HEK293 (cell line): ENCODE measurements at regions of chr10 and their contacts with region 1.

Region 1: GRCh38 chr10:74244097-74244685 is 93.2 kb downstream of the ADK start:
- H3K4me3 ChIP-seq: no peak overlapping the region
- H3K27ac ChIP-seq: no peak overlapping the region
- H3K4me1 ChIP-seq: no peaks in the 10 kb centered on the region
- CTCF ChIP-seq: peak; percentile 12; the same call in 1 of the 2 replicates

Region 2: DNA sequence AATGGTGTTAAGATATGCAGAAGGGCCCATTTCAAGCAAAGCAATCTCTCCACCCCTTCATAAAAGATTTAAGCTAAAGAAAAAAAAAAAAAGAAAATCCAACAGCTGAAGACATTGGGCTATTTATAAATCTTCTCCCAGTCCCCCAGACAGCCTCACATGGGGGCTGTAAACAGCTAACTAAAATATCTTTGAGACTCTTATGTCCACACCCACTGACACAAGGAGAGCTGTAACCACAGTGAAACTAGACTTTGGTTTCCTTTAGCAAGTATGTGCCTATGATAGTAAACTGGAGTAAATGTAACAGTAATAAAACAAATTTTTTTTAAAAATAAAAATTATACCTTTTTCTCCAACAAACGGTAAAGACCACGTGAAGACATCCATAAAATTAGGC is 777.0 kb before region 1 on chr10:
- CTCF ChIA-PET with region 1: no interaction called
- POLR2A ChIA-PET with region 1: no interaction called
- H3K4me3 ChIP-seq: no peak overlapping the region
- H3K27ac ChIP-seq: no peak overlapping the region
- H3K4me1 ChIP-seq: no peaks in the 10 kb centered on the region
- CTCF ChIP-seq: no peak

Region 3: GRCh38 chr10:74058658-74059057 is 185.5 kb before region 1 on chr10:
- CTCF ChIA-PET with region 1: no interaction called
- POLR2A ChIA-PET with region 1: no interaction called
- H3K4me3 ChIP-seq: no peak overlapping the region
- H3K27ac ChIP-seq: no peak overlapping the region
- H3K4me1 ChIP-seq: no peaks in the 10 kb centered on the region
- CTCF ChIP-seq: peak; percentile 58

Region 4: GRCh38 chr10:74071157-74071556 is 173.0 kb before region 1 on chr10:
- CTCF ChIA-PET with region 1: no interaction called
- POLR2A ChIA-PET with region 1: no interaction called
- H3K4me3 ChIP-seq: no peak overlapping the region
- H3K27ac ChIP-seq: no peak overlapping the region
- H3K4me1 ChIP-seq: no peaks in the 10 kb centered on the region
- CTCF ChIP-seq: no peak

Region 5: DNA sequence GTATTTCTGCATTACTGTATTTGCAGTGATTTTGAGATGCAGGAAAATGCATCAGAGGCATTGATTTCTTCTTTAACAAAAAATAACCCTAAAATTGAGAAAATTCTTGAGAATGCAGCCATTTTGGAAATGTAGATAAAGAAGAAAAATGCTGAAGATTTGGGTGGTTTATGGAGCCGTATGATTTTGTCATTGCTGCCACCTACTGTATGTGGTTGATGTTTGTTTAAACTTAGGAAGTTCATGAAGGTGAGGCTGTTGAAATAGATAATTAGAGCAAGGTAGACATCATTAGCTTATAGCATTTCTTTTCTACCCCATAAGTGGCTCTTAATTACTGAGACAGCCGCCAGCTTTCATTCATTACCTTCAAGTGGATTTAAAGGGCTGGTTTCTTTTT is 775.2 kb after region 1 on chr10:
- CTCF ChIA-PET with region 1: interaction called, 25 read pairs
- POLR2A ChIA-PET with region 1: no interaction called
- H3K4me3 ChIP-seq: no peak overlapping the region
- H3K27ac ChIP-seq: no peak overlapping the region
- H3K4me1 ChIP-seq: peaks cover 20% of the 10 kb centered on the region
- CTCF ChIP-seq: peak; percentile 38; the same call in 1 of the 2 replicates

Region 6: DNA sequence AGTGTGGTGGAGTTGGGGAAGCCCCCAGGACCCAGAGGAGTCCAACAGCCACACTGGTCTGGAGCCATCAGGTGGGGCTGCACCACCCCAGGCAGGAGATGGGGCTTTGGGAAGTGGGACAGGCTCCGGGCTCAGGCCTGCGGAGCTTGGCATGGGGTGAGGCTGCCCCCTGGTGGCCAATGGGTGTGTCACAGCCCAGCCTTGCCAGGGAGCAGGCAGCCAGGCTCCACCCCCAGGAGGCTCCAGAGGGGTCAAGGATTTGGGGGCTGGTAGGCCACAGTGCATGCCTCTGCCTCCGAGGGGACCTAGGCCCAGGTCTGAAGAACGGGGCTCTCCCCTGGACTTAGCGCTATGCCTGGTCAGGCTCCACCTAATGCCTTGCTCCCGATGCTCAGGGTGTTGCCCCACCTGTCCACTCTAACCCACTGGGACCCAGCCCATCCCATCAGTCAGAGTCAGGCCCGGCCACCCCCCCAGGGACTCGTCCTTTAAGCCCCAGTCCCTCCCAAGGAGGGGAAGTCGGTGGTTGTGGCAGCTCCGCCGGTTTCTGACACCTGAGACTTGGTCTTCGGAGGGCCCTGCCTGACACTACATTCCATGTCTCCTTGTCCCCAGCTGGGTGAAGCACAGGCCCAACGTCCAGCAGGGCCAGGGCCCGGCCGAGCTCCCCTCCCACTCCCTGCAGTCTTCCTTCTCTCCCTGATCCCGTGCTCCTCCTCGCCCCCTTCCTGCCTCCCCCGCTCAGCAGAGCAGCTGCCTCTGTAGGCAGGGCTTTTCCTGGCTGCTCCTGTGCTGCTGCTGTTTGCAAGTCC is 856.0 kb after region 1 on chr10:
- CTCF ChIA-PET with region 1: interaction called, 48 read pairs
- POLR2A ChIA-PET with region 1: no interaction called
- H3K4me3 ChIP-seq: no peak overlapping the region
- H3K27ac ChIP-seq: no peak overlapping the region
- H3K4me1 ChIP-seq: no peaks in the 10 kb centered on the region
- CTCF ChIP-seq: peak; percentile 96